ENCODE measurements at regions of chr15 and their contacts with region 1.

Region 1: DNA sequence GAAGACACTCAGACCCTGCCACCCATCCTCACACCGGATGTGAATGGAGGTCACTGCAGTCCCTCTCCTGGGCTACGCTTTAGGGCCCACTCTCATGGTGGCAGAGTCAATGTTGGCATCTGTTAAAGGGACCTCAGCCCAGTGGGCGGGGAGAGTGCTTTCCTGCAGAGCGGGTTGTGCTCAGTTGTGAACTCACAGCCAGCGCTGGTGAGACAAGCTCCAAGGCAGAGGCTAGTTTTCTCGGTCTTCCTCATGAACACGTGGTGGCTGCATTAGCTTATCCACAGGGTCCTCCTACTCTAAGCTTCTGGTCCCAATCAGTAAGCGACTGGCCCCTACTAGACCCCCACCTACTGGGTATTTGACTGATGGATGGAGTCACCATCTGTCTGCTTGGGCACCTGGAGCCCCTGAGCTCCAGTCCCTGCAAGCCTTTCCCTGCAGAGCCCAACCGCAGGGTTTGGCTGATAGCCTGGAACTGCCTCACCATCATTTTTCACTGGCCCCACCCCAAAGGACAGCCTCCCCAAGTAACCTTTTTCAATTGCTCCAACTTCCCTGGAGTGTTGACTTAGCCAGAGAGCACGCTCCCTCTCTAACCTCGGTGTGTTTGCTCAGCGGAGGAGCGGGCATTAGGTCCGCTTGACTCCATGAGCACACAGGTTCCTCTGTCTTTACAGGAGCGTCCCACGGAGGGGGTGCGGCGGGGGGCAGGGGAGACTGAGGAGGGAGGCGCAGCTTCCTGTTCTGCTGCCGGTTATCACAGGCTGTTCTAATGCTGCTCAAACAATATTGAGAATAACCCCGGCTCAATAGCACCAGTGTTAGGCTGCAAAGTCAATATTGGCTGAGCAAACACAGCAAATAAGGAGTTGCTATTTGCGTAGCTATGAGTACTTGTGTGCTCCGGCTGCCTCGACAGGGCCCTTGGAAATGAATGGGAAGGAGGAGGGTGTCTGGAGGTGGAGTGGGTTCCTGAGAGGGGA is 141.7 kb downstream of the RPLP1 start:
- DNase-seq: peak; percentile 95 to 97
- H3K4me3 ChIP-seq: no peak overlapping the region
- H3K4me3 Mint-ChIP-seq: peak overlapping the region; percentile 45
- H3K27ac Mint-ChIP-seq: peak overlapping the region; percentile 78
- H3K4me1 ChIP-seq: peaks cover 43% of the 10 kb centered on the region
- H3K4me1 Mint-ChIP-seq: peaks cover 27% of the 10 kb centered on the region
- H3K27me3 ChIP-seq: no peaks in the 10 kb centered on the region
- H3K27me3 Mint-ChIP-seq: peaks cover 17% of the 10 kb centered on the region
- CTCF ChIP-seq: no peak

Region 2: GRCh38 chr15:69468241-69469121 is 125.8 kb before region 1 on chr15:
- CTCF ChIA-PET with region 1: interaction called, 7 read pairs
- POLR2A ChIA-PET with region 1: interaction called, 6 read pairs
- intact Hi-C with region 1: loop called (anchors 1 kb)
- DNase-seq: peak in 1 of 2 experiments; percentile 47
- H3K4me3 ChIP-seq: no peak overlapping the region
- H3K4me3 Mint-ChIP-seq: peak overlapping the region; percentile 48
- H3K27ac Mint-ChIP-seq: peak overlapping the region; percentile 67
- H3K4me1 ChIP-seq: peaks cover 47% of the 10 kb centered on the region
- H3K4me1 Mint-ChIP-seq: peaks cover 26% of the 10 kb centered on the region
- H3K27me3 ChIP-seq: no peaks in the 10 kb centered on the region
- H3K27me3 Mint-ChIP-seq: no peaks in the 10 kb centered on the region
- CTCF ChIP-seq: no peak

Region 3: DNA sequence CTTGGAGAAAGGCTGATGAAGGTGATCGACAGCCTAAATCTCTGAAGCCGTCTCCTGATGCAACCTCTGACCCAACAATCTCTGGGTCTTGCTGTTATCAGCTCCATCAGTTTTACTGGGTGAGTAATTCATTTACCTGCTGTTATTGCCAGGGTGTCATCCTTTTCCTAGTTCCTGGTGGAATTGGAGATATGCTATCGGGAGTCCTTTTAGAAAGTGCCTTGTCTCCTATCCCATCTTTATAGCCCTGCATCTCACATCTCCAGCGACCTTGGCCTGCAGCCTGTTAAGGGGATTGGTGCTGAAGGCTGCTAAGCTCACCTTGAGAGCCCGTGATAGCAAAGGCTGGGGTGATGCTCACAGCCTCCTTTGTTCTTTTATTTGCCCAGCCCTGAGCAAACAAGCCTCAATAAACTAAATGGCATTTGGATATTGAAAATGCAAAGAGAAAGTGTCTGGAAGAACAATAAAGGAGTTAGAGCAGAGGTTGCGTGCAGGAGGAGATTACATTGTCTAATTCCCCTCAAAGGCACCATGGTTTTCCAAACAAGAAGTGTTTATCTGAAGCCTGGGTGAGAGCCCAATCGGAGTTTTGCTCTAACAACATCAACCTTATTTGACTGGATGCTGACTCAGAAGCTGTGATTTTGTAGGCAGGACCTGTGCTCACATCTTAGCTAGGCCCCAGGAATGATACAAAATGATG is 39.9 kb before region 1 on chr15:
- CTCF ChIA-PET with region 1: interaction called, 5 read pairs
- POLR2A ChIA-PET with region 1: no interaction called
- intact Hi-C with region 1: loop called (anchors 1 kb)
- DNase-seq: peak; percentile 88 to 94
- H3K4me3 ChIP-seq: no peak overlapping the region
- H3K4me3 Mint-ChIP-seq: no peak overlapping the region
- H3K27ac Mint-ChIP-seq: peak overlapping the region; percentile 61
- H3K4me1 ChIP-seq: peaks cover 44% of the 10 kb centered on the region
- H3K4me1 Mint-ChIP-seq: peaks cover 29% of the 10 kb centered on the region
- H3K27me3 ChIP-seq: no peaks in the 10 kb centered on the region
- H3K27me3 Mint-ChIP-seq: peaks cover 8% of the 10 kb centered on the region
- CTCF ChIP-seq: no peak

Region 4: GRCh38 chr15:69576035-69576526 is 18.2 kb before region 1 on chr15:
- CTCF ChIA-PET with region 1: interaction called, 5 read pairs
- POLR2A ChIA-PET with region 1: interaction called, 10 read pairs
- intact Hi-C with region 1: no loop called
- DNase-seq: no peak
- H3K4me3 ChIP-seq: no peak overlapping the region
- H3K4me3 Mint-ChIP-seq: no peak overlapping the region
- H3K27ac Mint-ChIP-seq: no peak overlapping the region
- H3K4me1 ChIP-seq: no peaks in the 10 kb centered on the region; the same call in 1 of the 2 replicates
- H3K4me1 Mint-ChIP-seq: no peaks in the 10 kb centered on the region
- H3K27me3 ChIP-seq: no peaks in the 10 kb centered on the region
- H3K27me3 Mint-ChIP-seq: no peaks in the 10 kb centered on the region
- CTCF ChIP-seq: peak in 1 of 2 experiments; percentile 24

Region 5: GRCh38 chr15:69825941-69826828 is 231.9 kb after region 1 on chr15:
- CTCF ChIA-PET with region 1: no interaction called
- POLR2A ChIA-PET with region 1: no interaction called
- intact Hi-C with region 1: no loop called
- DNase-seq: no peak
- H3K4me3 ChIP-seq: no peak overlapping the region
- H3K4me3 Mint-ChIP-seq: no peak overlapping the region
- H3K27ac Mint-ChIP-seq: no peak overlapping the region
- H3K4me1 ChIP-seq: no peaks in the 10 kb centered on the region
- H3K4me1 Mint-ChIP-seq: no peaks in the 10 kb centered on the region
- H3K27me3 ChIP-seq: no peaks in the 10 kb centered on the region; the same call in 1 of the 2 replicates
- H3K27me3 Mint-ChIP-seq: peaks cover 14% of the 10 kb centered on the region
- CTCF ChIP-seq: no peak